OCI-LY7 (cell line): ENCODE measurements at regions of chr17 and their contacts with region 1.

Region 1: GRCh38 chr17:29722411-29723198 is 99.9 kb upstream of the CORO6 start:
- DNase-seq: peak; percentile 95
- H3K4me3 ChIP-seq: peak overlapping the region; percentile 64
- H3K27ac ChIP-seq: peak overlapping the region; percentile 96
- H3K4me1 ChIP-seq: peaks cover 87% of the 10 kb centered on the region
- CTCF ChIP-seq: no peak

Region 2: GRCh38 chr17:29682054-29682453 is 40.6 kb before region 1 on chr17:
- CTCF ChIA-PET with region 1: interaction called, 3 read pairs
- POLR2A ChIA-PET with region 1: interaction called, 18 read pairs
- intact Hi-C with region 1: no loop called
- DNase-seq: peak; percentile 78
- H3K4me3 ChIP-seq: no peak overlapping the region
- H3K27ac ChIP-seq: peak overlapping the region; percentile 63
- H3K4me1 ChIP-seq: peaks cover 26% of the 10 kb centered on the region
- CTCF ChIP-seq: peak; percentile 63

Region 3: GRCh38 chr17:29707212-29707571 is 15.4 kb before region 1 on chr17:
- CTCF ChIA-PET with region 1: no interaction called
- POLR2A ChIA-PET with region 1: interaction called, 19 read pairs
- intact Hi-C with region 1: loop called (anchors 1 kb)
- DNase-seq: no peak
- H3K4me3 ChIP-seq: peak overlapping the region; percentile 44
- H3K27ac ChIP-seq: peak overlapping the region; percentile 81
- H3K4me1 ChIP-seq: peaks cover 39% of the 10 kb centered on the region
- CTCF ChIP-seq: no peak

Region 4: GRCh38 chr17:29732613-29733012 is 10.0 kb after region 1 on chr17:
- CTCF ChIA-PET with region 1: no interaction called
- POLR2A ChIA-PET with region 1: interaction called, 12 read pairs
- intact Hi-C with region 1: no loop called
- DNase-seq: no peak
- H3K4me3 ChIP-seq: no peak overlapping the region
- H3K27ac ChIP-seq: no peak overlapping the region
- H3K4me1 ChIP-seq: peaks cover 18% of the 10 kb centered on the region
- CTCF ChIP-seq: no peak

Region 5: GRCh38 chr17:29760761-29761696 is 38.4 kb after region 1 on chr17:
- CTCF ChIA-PET with region 1: interaction called, 3 read pairs
- POLR2A ChIA-PET with region 1: interaction called, 5 read pairs
- intact Hi-C with region 1: loop called (anchors 2 kb)
- DNase-seq: peak; percentile 91
- H3K4me3 ChIP-seq: peak overlapping the region; percentile 75
- H3K27ac ChIP-seq: peak overlapping the region; percentile 73
- H3K4me1 ChIP-seq: peaks cover 52% of the 10 kb centered on the region
- CTCF ChIP-seq: no peak

Region 6: DNA sequence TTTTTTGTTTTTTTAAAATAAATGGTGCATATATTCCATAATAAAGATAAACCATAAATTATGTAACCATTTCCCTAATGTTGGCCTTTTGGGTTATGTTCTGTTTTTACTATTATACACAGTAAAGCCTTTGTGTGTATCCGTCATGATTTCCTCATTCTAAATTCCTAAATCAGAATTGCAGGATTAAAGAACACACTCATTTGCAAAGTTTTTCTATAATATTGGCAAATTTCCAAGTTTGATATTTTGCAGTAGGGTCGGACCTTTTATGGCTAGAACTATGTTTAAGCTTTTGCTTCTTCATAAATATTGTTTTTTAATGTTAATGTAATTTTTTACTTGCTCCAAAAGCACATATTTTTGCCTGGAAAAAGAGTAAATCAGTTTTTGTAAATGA is 771.2 kb after region 1 on chr17:
- CTCF ChIA-PET with region 1: no interaction called
- POLR2A ChIA-PET with region 1: no interaction called
- intact Hi-C with region 1: no loop called
- DNase-seq: no peak
- H3K4me3 ChIP-seq: no peak overlapping the region
- H3K27ac ChIP-seq: no peak overlapping the region
- H3K4me1 ChIP-seq: no peaks in the 10 kb centered on the region
- CTCF ChIP-seq: no peak